ENCODE measurements at regions of chr11 and their contacts with region 1.

Region 1: GRCh38 chr11:65711785-65712632 is at the start of gene KAT5:
- DNase-seq: peak; percentile 93 to 99
- ATAC-seq: peak; percentile 88 to 92
- H3K4me3 ChIP-seq: peak within 1 kb of the TSS; percentile 60
- H3K27ac ChIP-seq: peak within 1 kb of the TSS; percentile 97 to 99
- H3K4me1 ChIP-seq: peaks cover 15% of the 10 kb centered on the region
- CTCF ChIP-seq: peak; percentile 94
- EP300 ChIP-seq: no peak
- POLR2A ChIP-seq: peak; percentile 33; the same call in 1 of the 2 replicates
- RAD21 ChIP-seq: peak; percentile 93 to 94
- polyA plus RNA-seq, gene KAT5: 25.8 and 34.6 TPM in 2 replicates

Region 2: GRCh38 chr11:65736810-65737209 is 24.8 kb after region 1 on chr11:
- CTCF ChIA-PET with region 1: interaction called, 11 read pairs
- POLR2A ChIA-PET with region 1: interaction called, 3 read pairs
- DNase-seq: no peak
- ATAC-seq: no peak
- H3K4me3 ChIP-seq: no peak overlapping the region
- H3K27ac ChIP-seq: no peak overlapping the region
- H3K4me1 ChIP-seq: no peaks in the 10 kb centered on the region
- CTCF ChIP-seq: no peak
- EP300 ChIP-seq: no peak
- POLR2A ChIP-seq: no peak
- RAD21 ChIP-seq: no peak

Region 3: DNA sequence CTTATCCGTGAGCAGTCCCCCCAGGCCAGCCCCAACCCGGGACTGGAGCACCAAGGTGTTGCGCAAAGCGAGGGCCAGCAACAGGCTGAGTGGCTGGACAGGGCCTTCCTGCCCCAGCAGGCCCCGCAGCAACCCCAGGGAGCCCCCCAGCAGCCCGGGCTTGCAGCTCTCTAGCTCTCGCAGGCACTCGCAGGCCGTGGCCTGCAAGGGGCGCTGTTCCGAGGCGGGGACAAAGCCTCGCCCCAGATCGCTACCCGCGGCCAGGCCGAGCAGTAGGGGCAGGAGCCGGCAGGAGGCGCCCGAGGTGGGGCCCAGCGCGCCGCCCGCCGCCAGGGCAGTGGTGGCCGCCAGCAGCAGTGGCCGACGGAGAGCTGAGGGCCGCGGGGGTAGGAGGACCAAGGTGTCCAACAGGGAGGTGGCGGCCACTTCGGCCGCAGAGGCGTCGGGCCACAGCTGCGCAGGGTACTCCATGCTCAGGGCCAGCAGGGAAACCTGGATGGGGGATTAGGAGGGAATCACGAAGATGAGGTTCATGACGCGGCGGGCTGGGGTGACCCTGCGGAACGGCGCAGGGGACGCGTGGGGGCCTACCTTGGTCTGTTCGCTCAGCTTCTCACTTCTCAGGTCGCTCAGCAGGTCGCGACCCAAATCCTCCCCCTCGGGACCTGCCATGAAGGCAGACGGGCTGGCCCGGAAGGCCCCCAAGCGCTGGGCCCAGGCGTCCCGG is 68.0 kb after region 1 on chr11:
- CTCF ChIA-PET with region 1: interaction called, 65 read pairs
- POLR2A ChIA-PET with region 1: interaction called, 4 read pairs
- DNase-seq: peak; percentile 76 to 88
- ATAC-seq: peak; percentile 81 to 92
- H3K4me3 ChIP-seq: peak overlapping the region; percentile 98
- H3K27ac ChIP-seq: peak overlapping the region; percentile 93 to 98
- H3K4me1 ChIP-seq: peaks cover 11% of the 10 kb centered on the region
- CTCF ChIP-seq: peak; percentile 96
- EP300 ChIP-seq: no peak
- POLR2A ChIP-seq: peak; percentile 49
- RAD21 ChIP-seq: peak; percentile 29 to 66; a peak in 4 of 5 replicates

Region 4: DNA sequence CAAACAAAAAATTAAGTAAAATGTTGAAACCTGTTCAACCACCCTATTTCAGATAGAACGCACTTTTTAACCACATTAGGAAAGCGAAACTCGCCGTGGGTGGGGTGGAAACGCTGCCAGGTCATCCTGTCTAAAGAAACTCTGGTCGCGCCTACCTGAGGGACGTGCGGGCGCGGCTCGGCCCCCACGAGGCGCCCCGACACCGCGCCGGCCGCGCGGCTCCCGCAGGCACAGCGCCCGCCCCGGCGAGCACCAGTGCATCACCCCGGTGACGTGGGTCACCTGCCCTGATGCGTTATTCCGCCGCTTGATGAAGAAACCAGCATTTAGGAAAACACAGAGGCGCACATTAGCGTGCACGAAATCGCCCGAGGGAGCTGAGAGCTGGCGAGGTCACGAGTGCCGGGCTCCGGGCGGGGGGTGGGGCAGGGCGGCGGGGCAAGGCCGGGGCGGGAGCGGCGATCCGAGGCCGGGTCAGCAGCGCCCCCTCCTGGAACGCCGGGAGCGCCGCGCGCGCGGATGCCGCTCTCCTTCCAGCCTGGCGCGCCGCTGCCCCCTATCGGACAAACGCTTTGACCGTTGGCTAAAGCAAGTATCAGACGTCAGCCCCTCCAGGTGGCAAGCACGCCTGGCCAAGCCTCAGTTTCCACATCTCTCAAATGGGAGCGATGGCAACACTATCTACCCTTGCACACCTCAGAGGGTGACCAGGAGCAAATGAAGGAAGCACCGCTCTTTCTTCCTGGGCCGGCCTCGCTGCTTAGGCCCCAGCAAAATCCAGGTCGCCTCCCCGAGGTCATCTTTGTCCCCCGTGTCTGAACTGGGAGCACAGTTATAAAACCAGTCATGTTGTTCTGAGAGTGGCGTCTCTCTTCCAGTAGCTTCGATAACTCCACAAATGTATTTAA is 106.1 kb after region 1 on chr11:
- CTCF ChIA-PET with region 1: interaction called, 222 read pairs
- POLR2A ChIA-PET with region 1: interaction called, 18 read pairs
- DNase-seq: peak; percentile 81 to 88
- ATAC-seq: peak; percentile 91 to 93
- H3K4me3 ChIP-seq: peak overlapping the region; percentile 57
- H3K27ac ChIP-seq: peak overlapping the region; percentile 82 to 89
- H3K4me1 ChIP-seq: peaks cover 6% of the 10 kb centered on the region; the same call in 1 of the 3 replicates
- CTCF ChIP-seq: peak; percentile 100
- EP300 ChIP-seq: no peak; a peak in 1 of 5 replicates
- POLR2A ChIP-seq: peak; percentile 50
- RAD21 ChIP-seq: peak; percentile 87 to 99

Region 5: GRCh38 chr11:65859200-65859811 is 147.3 kb after region 1 on chr11:
- CTCF ChIA-PET with region 1: interaction called, 18 read pairs
- POLR2A ChIA-PET with region 1: interaction called, 29 read pairs
- DNase-seq: peak; percentile 97 to 99
- ATAC-seq: peak; percentile 57 to 82
- H3K4me3 ChIP-seq: peak overlapping the region; percentile 70
- H3K27ac ChIP-seq: peak overlapping the region; percentile 88 to 96
- H3K4me1 ChIP-seq: peaks cover 30% of the 10 kb centered on the region
- CTCF ChIP-seq: no peak
- EP300 ChIP-seq: no peak
- POLR2A ChIP-seq: peak; percentile 71
- RAD21 ChIP-seq: no peak

Measured in A549 (cell line).